ENCODE measurements at regions of chr19 and their contacts with region 1.

Region 1: GRCh38 chr19:10580979-10581631 is 6.0 kb downstream of the AP1M2 start:
- DNase-seq: peak; percentile 95
- ATAC-seq: peak; percentile 98
- H3K4me3 Mint-ChIP-seq: no peak overlapping the region
- H3K27ac Mint-ChIP-seq: no peak overlapping the region
- H3K4me1 Mint-ChIP-seq: peaks cover 17% of the 10 kb centered on the region
- H3K27me3 Mint-ChIP-seq: no peaks in the 10 kb centered on the region

Region 2: DNA sequence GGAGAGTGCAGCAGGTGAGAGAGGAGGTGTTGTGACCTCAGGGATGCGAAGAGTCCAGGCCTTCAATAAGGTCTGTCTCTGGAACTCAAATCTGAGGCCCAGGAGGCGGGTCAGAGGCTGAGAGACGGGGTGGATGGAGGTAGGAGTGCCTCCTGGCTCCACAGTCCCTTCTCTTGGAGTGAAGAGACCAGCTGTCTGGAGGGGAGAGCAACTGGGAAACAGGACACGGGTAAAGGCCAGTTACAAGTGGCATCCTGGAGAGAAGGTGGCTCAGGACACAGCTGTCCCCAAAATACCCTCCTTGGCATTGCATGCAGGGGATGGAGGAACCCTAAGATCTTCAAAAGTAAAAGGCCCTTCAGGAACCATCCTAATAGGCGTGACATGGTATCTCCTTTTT is 141.5 kb before region 1 on chr19:
- CTCF ChIA-PET with region 1: no interaction called
- POLR2A ChIA-PET with region 1: no interaction called
- intact Hi-C with region 1: no loop called
- DNase-seq: no peak
- ATAC-seq: no peak
- H3K4me3 Mint-ChIP-seq: no peak overlapping the region
- H3K27ac Mint-ChIP-seq: no peak overlapping the region
- H3K4me1 Mint-ChIP-seq: no peaks in the 10 kb centered on the region
- H3K27me3 Mint-ChIP-seq: peaks cover 3% of the 10 kb centered on the region

Region 3: DNA sequence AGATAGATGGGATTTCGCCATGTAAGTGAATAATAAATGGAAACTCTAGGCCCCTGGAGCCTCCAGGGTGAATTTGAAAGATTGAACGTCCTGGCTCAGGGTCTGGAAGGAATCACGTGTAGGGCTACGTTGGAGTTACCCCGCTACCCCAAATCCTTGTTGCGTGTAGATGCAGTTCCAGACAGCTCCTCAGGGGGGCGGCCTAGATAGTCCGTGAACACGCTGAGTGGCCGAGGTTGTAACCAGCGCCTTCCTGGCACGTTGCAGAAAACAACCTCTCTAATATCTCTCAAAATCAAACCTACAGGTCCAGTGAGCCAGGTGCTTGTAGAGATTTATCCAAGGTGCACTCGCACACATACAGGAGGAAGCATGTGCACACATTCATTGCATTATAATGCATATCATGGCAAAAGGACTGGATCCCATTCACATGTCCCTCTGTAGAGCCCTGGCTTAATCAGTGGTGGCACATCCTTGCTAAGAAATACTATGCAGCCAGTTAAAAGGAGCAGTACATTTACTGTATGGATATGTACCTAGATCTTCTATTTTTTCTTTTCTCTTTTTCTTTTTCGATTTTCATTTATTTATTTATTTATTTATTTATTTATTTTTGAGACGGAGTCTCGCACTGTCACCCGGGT is 75.4 kb before region 1 on chr19:
- CTCF ChIA-PET with region 1: no interaction called
- POLR2A ChIA-PET with region 1: no interaction called
- intact Hi-C with region 1: no loop called
- DNase-seq: peak; percentile 93
- ATAC-seq: peak; percentile 43
- H3K4me3 Mint-ChIP-seq: peak overlapping the region; percentile 3
- H3K27ac Mint-ChIP-seq: no peak overlapping the region
- H3K4me1 Mint-ChIP-seq: peaks cover 21% of the 10 kb centered on the region
- H3K27me3 Mint-ChIP-seq: no peaks in the 10 kb centered on the region

Region 4: GRCh38 chr19:10593820-10594637 is 12.9 kb after region 1 on chr19:
- CTCF ChIA-PET with region 1: interaction called, 15 read pairs
- POLR2A ChIA-PET with region 1: interaction called, 4 read pairs
- intact Hi-C with region 1: no loop called
- DNase-seq: no peak
- ATAC-seq: no peak
- H3K4me3 Mint-ChIP-seq: no peak overlapping the region
- H3K27ac Mint-ChIP-seq: no peak overlapping the region
- H3K4me1 Mint-ChIP-seq: peaks cover 24% of the 10 kb centered on the region
- H3K27me3 Mint-ChIP-seq: no peaks in the 10 kb centered on the region

Region 5: DNA sequence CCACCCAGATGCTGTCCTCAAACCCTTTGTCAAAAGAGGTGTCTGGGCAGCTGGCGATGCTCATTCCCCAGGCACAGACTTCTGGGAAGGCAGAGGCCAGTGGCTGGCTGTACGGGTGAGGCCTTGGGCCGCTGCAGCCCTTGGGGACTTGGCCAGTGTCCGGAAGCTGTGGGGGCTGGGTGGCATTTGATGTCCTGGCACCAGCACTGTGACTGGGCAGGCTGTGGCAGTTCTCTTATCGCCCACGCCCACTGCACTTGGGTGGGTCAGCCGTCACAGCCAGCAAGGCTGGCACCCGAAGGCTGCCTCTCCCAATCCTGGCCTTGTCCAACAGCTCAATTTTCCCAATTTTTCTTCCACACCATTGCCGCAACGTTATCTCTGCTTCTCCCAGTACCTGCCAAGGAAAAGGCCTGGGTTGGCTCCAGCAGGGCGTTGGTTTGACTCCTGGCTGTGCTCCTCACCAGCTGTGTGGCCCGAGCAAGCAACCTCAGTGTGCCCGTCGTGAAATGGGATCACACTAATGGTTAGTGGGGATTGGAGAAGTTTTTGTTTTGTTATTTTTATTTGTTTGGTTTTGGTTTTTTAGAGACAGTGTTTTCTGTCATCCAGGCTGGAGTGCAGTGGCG is 31.5 kb after region 1 on chr19:
- CTCF ChIA-PET with region 1: interaction called, 14 read pairs
- POLR2A ChIA-PET with region 1: interaction called, 5 read pairs
- intact Hi-C with region 1: no loop called
- DNase-seq: no peak
- ATAC-seq: no peak
- H3K4me3 Mint-ChIP-seq: no peak overlapping the region
- H3K27ac Mint-ChIP-seq: no peak overlapping the region
- H3K4me1 Mint-ChIP-seq: peaks cover 21% of the 10 kb centered on the region
- H3K27me3 Mint-ChIP-seq: no peaks in the 10 kb centered on the region

Region 6: GRCh38 chr19:10644260-10645007 is 63.3 kb after region 1 on chr19:
- CTCF ChIA-PET with region 1: interaction called, 239 read pairs
- POLR2A ChIA-PET with region 1: interaction called, 7 read pairs
- intact Hi-C with region 1: loop called (anchors 1 kb)
- DNase-seq: peak; percentile 91
- ATAC-seq: peak; percentile 87
- H3K4me3 Mint-ChIP-seq: no peak overlapping the region
- H3K27ac Mint-ChIP-seq: no peak overlapping the region
- H3K4me1 Mint-ChIP-seq: peaks cover 30% of the 10 kb centered on the region
- H3K27me3 Mint-ChIP-seq: no peaks in the 10 kb centered on the region

Region 7: GRCh38 chr19:10695401-10696398 is 114.6 kb after region 1 on chr19:
- CTCF ChIA-PET with region 1: interaction called, 164 read pairs
- POLR2A ChIA-PET with region 1: interaction called, 7 read pairs
- intact Hi-C with region 1: loop called (anchors 1 kb)
- DNase-seq: peak; percentile 95
- ATAC-seq: peak; percentile 99
- H3K4me3 Mint-ChIP-seq: peak overlapping the region; percentile 59
- H3K27ac Mint-ChIP-seq: no peak overlapping the region
- H3K4me1 Mint-ChIP-seq: peaks cover 13% of the 10 kb centered on the region
- H3K27me3 Mint-ChIP-seq: no peaks in the 10 kb centered on the region

Region 8: GRCh38 chr19:11673608-11674041 is 1092.5 kb after region 1 on chr19:
- CTCF ChIA-PET with region 1: no interaction called
- POLR2A ChIA-PET with region 1: no interaction called
- intact Hi-C with region 1: no loop called
- DNase-seq: peak; percentile 62
- ATAC-seq: peak; percentile 73
- H3K4me3 Mint-ChIP-seq: peak overlapping the region; percentile 14
- H3K27ac Mint-ChIP-seq: no peak overlapping the region
- H3K4me1 Mint-ChIP-seq: peaks cover 3% of the 10 kb centered on the region
- H3K27me3 Mint-ChIP-seq: peaks cover 23% of the 10 kb centered on the region

Measured in activated CD4-positive, alpha-beta T cell treated with anti-CD3 and anti-CD28 coated beads for 36 hours (primary cell).